ENCODE measurements at regions of chr4 and their contacts with region 1.

Region 1: DNA sequence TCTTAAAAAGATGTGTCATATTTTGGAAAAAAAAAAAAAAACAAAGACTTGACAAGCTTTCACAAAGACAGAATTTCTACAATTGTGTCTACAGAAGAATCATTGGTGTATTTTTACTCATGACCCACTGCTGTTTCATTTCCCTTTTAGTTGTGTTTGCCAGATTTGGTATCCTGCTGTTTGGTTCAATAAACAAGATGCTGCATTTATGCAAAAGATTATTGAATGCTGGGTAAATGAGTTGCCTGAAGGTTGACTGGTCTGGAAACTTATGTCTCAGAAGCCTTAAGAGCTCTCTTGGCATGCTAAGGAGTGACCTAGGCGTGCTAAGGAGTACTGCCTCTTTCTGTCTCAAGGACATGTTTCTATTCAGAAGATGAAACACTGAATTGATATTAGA is 64.9 kb upstream of the NPY2R start:
- DNase-seq: peak; percentile 4
- H3K4me3 ChIP-seq: no peak overlapping the region
- H3K27ac ChIP-seq: no peak overlapping the region
- H3K4me1 ChIP-seq: no peaks in the 10 kb centered on the region
- H3K27me3 ChIP-seq: no peaks in the 10 kb centered on the region
- CTCF ChIP-seq: no peak

Region 2: DNA sequence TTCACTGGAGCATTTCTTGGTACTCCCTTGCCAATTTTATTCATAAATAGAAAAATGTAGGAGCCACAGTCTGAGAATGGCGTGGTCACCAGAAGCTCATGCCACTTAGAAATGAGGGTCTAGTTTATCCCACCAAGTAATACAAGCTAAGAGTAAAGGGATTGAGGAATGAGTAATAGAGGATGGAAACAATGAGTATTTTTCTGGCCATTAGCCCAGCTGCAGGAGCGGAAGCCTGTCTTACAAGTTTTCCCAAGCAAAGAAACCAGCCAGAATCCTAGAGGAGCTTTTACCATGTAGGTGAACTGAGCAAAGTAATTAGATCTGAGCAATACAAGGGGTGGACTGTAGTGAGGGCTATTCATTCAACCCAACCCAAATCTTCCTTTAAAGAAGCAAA is 95.8 kb before region 1 on chr4:
- CTCF ChIA-PET with region 1: no interaction called
- POLR2A ChIA-PET with region 1: no interaction called
- intact Hi-C with region 1: no loop called
- DNase-seq: no peak
- H3K4me3 ChIP-seq: no peak overlapping the region
- H3K27ac ChIP-seq: no peak overlapping the region
- H3K4me1 ChIP-seq: no peaks in the 10 kb centered on the region
- H3K27me3 ChIP-seq: no peaks in the 10 kb centered on the region
- CTCF ChIP-seq: no peak

Region 3: DNA sequence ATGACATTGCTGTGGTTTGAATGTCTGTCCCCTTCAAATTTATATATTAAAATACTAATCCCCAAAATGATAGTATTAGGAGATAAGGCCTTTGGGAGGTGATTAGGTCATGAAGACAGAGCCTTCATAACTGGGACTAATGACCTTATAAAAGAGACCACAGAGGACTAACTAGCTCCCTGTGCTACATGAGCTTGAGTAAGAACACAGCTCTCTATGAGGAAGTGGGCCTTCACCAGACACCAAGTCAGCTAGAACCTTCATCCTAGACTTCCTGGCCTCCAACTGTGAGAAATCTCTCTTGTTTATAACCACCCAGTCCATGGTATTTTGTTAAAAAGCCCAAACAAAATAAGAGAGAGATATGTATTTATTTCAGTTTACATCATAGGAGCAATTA is 1052.4 kb after region 1 on chr4:
- CTCF ChIA-PET with region 1: no interaction called
- POLR2A ChIA-PET with region 1: no interaction called
- intact Hi-C with region 1: loop called (anchors 10 kb)
- DNase-seq: no peak
- H3K4me3 ChIP-seq: no peak overlapping the region
- H3K27ac ChIP-seq: no peak overlapping the region
- H3K4me1 ChIP-seq: peaks cover 5% of the 10 kb centered on the region
- H3K27me3 ChIP-seq: no peaks in the 10 kb centered on the region
- CTCF ChIP-seq: no peak